ENCODE measurements at regions of chr15 and their contacts with region 1.

Region 1: GRCh38 chr15:96356494-96357455 is 26.3 kb downstream of the NR2F2 start:
- DNase-seq: peak; percentile 28 to 85 (median 62)
- ATAC-seq: peak; percentile 80
- H3K4me3 ChIP-seq: peak overlapping the region; percentile 42
- H3K4me3 Mint-ChIP-seq: peak overlapping the region; percentile 84 to 91 (median 88)
- H3K27ac ChIP-seq: no peak overlapping the region
- H3K27ac Mint-ChIP-seq: peak overlapping the region in 6 of 9 donors; percentile 51 to 81 (median 72)
- H3K4me1 ChIP-seq: peaks cover 7 to 11% of the 10 kb centered on the region in 2 donors
- H3K4me1 Mint-ChIP-seq: peaks cover 18 to 45% (median 34%) of the 10 kb centered on the region in 7 donors
- H3K27me3 ChIP-seq: peaks cover 23 to 53% of the 10 kb centered on the region in 2 donors
- H3K27me3 Mint-ChIP-seq: peaks cover 52 to 64% (median 58%) of the 10 kb centered on the region in 5 donors

Region 2: DNA sequence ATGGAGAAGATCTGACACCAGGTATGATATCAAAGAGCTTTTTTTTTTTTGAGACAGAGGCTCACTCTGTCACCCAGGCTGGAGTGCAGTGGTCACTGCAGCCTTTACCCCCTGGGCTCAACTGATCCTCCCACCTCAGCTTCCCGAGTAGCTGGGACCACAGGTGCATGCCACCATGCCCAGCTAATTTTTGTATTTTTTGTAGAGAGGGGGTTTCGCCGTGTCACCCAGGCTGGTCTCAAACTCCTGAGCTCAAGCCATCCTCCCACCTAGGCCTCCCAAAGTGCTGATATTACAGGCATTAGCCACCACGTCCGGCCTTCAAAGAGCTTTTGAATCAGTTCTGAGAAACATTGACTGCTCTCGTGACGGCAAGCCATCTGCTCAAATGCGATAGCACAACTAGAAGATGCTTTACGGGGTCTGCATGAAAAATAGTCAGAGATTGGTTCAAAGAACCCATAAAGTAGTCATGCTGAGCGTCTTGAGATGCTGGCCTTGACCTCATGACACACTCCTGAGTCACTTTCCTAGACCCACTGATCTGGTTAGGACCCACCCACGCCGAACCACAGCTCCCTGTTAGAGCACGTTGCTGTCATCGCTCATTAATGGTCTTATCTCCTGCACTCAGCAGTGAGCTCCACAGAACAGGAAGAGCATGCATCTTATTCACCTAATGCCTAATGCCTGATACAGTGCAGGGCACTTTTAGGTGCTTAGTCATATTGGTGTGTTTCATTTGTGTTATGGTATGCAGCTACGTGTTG is 83.3 kb before region 1 on chr15:
- CTCF ChIA-PET with region 1: no interaction called
- POLR2A ChIA-PET with region 1: no interaction called
- intact Hi-C with region 1: no loop called
- DNase-seq: no peak
- ATAC-seq: no peak
- H3K4me3 ChIP-seq: no peak overlapping the region
- H3K4me3 Mint-ChIP-seq: peak overlapping the region in 1 of 10 donors; percentile 23
- H3K27ac ChIP-seq: no peak overlapping the region
- H3K27ac Mint-ChIP-seq: no peak overlapping the region
- H3K4me1 ChIP-seq: no peaks in the 10 kb centered on the region
- H3K4me1 Mint-ChIP-seq: no peaks in the 10 kb centered on the region
- H3K27me3 ChIP-seq: no peaks in the 10 kb centered on the region
- H3K27me3 Mint-ChIP-seq: peaks cover 0 to 27% (median 24%) of the 10 kb centered on the region in 5 donors

Region 3: DNA sequence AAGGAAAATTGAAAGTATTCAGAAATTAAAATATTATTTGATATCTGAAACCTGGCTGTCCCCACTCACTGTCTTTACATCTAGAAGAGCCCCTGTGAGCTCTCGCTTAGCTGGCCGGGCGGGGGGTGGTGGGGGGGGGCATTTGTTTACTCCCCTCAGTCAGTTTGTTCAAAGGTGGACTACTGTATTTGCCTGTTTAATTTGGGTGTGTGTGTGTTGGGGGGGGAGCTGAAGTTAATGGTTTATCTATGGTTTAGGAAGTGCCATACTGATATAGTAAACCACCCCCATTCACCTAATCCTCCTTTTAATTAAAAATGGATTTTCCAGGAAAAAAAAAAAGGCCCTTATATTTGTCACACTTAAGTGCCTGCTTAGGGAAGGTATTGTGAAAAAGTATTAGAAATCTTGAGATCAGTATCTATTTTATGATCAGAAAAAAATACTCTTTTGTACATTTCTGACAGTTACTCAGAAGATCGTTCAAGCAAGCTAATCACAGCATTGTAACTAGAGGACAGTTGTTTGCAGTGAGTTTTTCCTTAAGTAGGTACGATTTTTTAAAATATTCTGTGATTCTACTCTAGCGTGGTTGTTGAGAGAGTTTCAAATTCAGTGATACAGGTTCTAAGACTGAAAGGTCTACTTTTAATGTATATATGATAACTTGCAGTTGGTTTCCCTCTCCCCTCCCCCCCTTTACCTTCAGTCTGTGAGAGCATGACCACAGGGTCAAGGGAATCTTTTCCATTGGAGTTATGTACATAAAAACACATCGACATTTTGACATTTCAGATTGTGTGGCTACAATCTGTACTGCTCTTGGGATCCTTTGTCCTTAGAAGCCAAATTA is 17.8 kb before region 1 on chr15:
- CTCF ChIA-PET with region 1: no interaction called
- POLR2A ChIA-PET with region 1: no interaction called
- intact Hi-C with region 1: loop called in 1 of 2 experiments (anchors 2 kb)
- DNase-seq: no peak
- ATAC-seq: no peak
- H3K4me3 ChIP-seq: no peak overlapping the region
- H3K4me3 Mint-ChIP-seq: no peak overlapping the region
- H3K27ac ChIP-seq: no peak overlapping the region
- H3K27ac Mint-ChIP-seq: no peak overlapping the region
- H3K4me1 ChIP-seq: no peaks in the 10 kb centered on the region
- H3K4me1 Mint-ChIP-seq: peaks cover 0 to 18% (median 7%) of the 10 kb centered on the region in 7 donors
- H3K27me3 ChIP-seq: peaks cover 0 to 40% of the 10 kb centered on the region in 2 donors
- H3K27me3 Mint-ChIP-seq: peaks cover 84 to 95% (median 93%) of the 10 kb centered on the region in 5 donors

Region 4: DNA sequence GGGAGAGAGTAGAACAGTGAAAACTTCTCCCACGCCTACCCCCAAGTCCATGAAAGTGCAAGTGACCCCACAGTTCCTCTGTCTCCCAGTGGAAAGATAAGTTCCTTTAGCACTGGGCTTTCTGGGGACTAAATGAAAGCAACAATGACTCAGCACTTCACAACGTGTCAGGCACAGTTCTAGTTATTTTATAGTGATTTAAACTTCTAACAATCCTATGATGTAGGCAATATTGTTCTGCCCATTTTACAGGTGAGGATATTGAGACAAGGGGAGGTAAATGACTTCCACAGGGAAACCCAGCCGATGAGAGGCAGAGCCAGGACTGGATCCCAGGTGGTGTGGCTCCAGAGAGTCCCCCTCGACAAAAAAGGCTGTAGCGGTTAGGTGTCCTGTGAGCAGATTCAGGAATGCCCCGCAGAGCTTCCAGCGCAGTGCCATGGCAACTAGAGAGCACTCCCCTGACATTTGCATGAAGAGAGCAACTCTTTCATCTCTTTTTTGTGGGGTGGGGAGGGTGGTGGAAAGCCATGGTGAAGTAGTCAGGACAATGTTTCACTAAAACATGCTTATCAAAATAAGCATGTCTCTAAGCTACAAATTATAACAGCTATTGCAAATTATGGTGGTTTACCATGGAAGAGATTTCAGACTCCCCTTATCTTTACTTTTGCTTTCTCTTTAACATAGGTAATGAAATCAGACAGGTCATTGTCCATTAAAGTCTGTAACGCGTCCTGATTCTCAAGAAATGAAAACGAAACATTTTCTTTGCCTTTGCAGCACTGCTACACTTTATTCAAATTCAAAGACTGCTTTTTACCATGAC is 35.8 kb after region 1 on chr15:
- CTCF ChIA-PET with region 1: no interaction called
- POLR2A ChIA-PET with region 1: no interaction called
- intact Hi-C with region 1: no loop called
- DNase-seq: no peak
- ATAC-seq: no peak
- H3K4me3 ChIP-seq: no peak overlapping the region
- H3K4me3 Mint-ChIP-seq: no peak overlapping the region
- H3K27ac ChIP-seq: no peak overlapping the region
- H3K27ac Mint-ChIP-seq: no peak overlapping the region
- H3K4me1 ChIP-seq: no peaks in the 10 kb centered on the region
- H3K4me1 Mint-ChIP-seq: no peaks in the 10 kb centered on the region
- H3K27me3 ChIP-seq: no peaks in the 10 kb centered on the region
- H3K27me3 Mint-ChIP-seq: peaks cover 0 to 57% (median 48%) of the 10 kb centered on the region in 5 donors

Region 5: GRCh38 chr15:96409215-96410138 is 52.7 kb after region 1 on chr15:
- CTCF ChIA-PET with region 1: no interaction called
- POLR2A ChIA-PET with region 1: no interaction called
- intact Hi-C with region 1: loop called in 1 of 2 experiments (anchors 2 kb)
- DNase-seq: no peak
- ATAC-seq: no peak
- H3K4me3 ChIP-seq: no peak overlapping the region
- H3K4me3 Mint-ChIP-seq: peak overlapping the region in 3 of 10 donors; percentile 26 to 57 (median 39)
- H3K27ac ChIP-seq: no peak overlapping the region
- H3K27ac Mint-ChIP-seq: peak overlapping the region in 1 of 9 donors; percentile 74
- H3K4me1 ChIP-seq: no peaks in the 10 kb centered on the region
- H3K4me1 Mint-ChIP-seq: peaks cover 0 to 14% (median 8%) of the 10 kb centered on the region in 7 donors
- H3K27me3 ChIP-seq: peaks cover 3 to 22% of the 10 kb centered on the region in 2 donors
- H3K27me3 Mint-ChIP-seq: peaks cover 76 to 87% (median 84%) of the 10 kb centered on the region in 5 donors

Region 6: GRCh38 chr15:96583688-96584087 is 226.9 kb after region 1 on chr15:
- CTCF ChIA-PET with region 1: no interaction called
- POLR2A ChIA-PET with region 1: no interaction called
- intact Hi-C with region 1: loop called in 1 of 2 experiments (anchors 5 kb)
- DNase-seq: no peak
- ATAC-seq: no peak
- H3K4me3 ChIP-seq: no peak overlapping the region
- H3K4me3 Mint-ChIP-seq: no peak overlapping the region
- H3K27ac ChIP-seq: no peak overlapping the region
- H3K27ac Mint-ChIP-seq: no peak overlapping the region
- H3K4me1 ChIP-seq: no peaks in the 10 kb centered on the region
- H3K4me1 Mint-ChIP-seq: no peaks in the 10 kb centered on the region
- H3K27me3 ChIP-seq: no peaks in the 10 kb centered on the region
- H3K27me3 Mint-ChIP-seq: peaks cover 0 to 12% (median 0%) of the 10 kb centered on the region in 5 donors

Region 7: DNA sequence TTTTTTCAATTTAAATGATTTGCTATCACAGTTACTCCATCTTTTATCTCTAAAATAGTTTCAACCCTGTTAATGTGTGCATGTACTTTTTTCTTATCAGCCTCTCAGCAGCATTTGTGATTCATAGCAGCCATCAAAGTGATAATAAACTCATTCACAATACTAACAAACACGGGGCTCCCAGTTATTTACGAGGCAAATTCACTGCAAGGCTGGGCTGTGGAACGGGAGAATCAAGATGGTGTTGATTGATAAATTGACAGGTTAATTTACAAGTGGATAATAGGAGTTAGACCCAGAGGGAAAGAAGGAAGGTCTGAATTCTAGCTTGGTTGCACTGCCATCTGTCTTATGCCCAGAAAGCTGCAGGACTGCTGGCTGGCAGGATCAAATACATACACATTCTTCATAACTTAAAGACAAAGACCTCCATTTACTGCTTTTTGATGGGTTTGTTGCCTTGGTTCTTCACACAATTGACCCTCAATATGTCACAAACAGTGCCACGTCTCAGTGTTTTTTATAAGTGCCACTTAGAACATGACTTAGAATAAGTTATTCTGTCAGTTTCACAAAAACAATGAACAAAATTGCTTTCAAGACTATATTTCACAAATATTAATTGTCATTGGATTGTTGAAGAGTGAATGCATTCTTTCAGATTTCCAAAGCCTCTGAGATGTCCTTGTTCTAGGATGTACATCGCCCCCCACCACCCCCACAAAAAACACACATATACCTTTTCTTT is 536.6 kb after region 1 on chr15:
- CTCF ChIA-PET with region 1: no interaction called
- POLR2A ChIA-PET with region 1: no interaction called
- intact Hi-C with region 1: loop called in 1 of 2 experiments (anchors 5 kb)
- DNase-seq: no peak
- ATAC-seq: no peak
- H3K4me3 ChIP-seq: no peak overlapping the region
- H3K4me3 Mint-ChIP-seq: no peak overlapping the region
- H3K27ac ChIP-seq: no peak overlapping the region
- H3K27ac Mint-ChIP-seq: no peak overlapping the region
- H3K4me1 ChIP-seq: peaks cover 0 to 7% of the 10 kb centered on the region in 2 donors
- H3K4me1 Mint-ChIP-seq: peaks cover 4 to 25% (median 16%) of the 10 kb centered on the region in 7 donors
- H3K27me3 ChIP-seq: no peaks in the 10 kb centered on the region
- H3K27me3 Mint-ChIP-seq: peaks cover 0 to 11% (median 0%) of the 10 kb centered on the region in 5 donors